ENCODE measurements at regions of chr4 and their contacts with region 1.

Region 1: DNA sequence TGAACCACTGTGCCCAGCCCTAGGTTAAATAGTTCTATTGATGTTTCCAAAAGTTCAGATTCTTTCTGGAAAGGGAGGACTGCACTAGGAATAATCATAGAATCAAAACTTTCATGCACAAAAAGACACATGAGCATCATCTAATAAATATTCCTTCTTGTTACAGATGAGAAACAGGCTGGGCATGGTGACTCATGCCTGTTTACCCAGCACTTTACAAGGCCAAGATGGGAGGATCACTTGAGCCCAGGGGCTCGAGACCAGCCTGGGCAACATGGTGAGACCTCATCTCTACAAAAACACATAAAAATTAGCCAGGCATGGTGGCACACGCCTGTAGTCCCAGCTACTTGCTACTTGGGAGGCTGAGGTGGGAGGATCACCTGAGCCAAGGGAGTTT is 27.7 kb downstream of the LARP7 start:
- DNase-seq: no peak
- H3K4me3 Mint-ChIP-seq: no peak overlapping the region
- H3K27ac Mint-ChIP-seq: no peak overlapping the region
- H3K4me1 Mint-ChIP-seq: no peaks in the 10 kb centered on the region
- H3K27me3 Mint-ChIP-seq: no peaks in the 10 kb centered on the region

Region 2: GRCh38 chr4:111890412-111890811 is 774.2 kb before region 1 on chr4:
- intact Hi-C with region 1: no loop called
- DNase-seq: no peak
- H3K4me3 Mint-ChIP-seq: no peak overlapping the region
- H3K27ac Mint-ChIP-seq: no peak overlapping the region
- H3K4me1 Mint-ChIP-seq: no peaks in the 10 kb centered on the region
- H3K27me3 Mint-ChIP-seq: no peaks in the 10 kb centered on the region

Region 3: DNA sequence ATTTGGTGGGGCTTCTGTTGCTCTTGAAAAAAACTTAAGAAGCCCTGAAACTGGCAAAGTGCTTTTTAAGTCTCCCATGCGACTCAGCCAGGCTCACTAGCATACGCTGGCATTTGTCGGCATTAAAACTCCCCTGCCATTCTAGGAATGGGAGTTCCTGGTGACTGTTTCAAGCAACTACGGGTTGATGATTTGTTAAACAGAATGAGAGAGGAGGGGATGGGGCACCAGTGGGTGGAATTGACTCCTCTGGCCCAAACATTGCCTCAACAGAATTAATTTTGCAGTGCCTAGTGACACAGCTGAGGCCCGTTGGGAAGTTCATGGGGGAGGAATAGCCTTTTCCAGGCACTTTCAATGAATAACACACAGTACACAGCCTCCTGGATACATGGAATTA is 178.7 kb before region 1 on chr4:
- intact Hi-C with region 1: no loop called
- DNase-seq: no peak
- H3K4me3 Mint-ChIP-seq: no peak overlapping the region
- H3K27ac Mint-ChIP-seq: no peak overlapping the region
- H3K4me1 Mint-ChIP-seq: no peaks in the 10 kb centered on the region
- H3K27me3 Mint-ChIP-seq: peaks cover 2% of the 10 kb centered on the region

Region 4: GRCh38 chr4:112589206-112589605 is 75.4 kb before region 1 on chr4:
- intact Hi-C with region 1: no loop called
- DNase-seq: no peak
- H3K4me3 Mint-ChIP-seq: no peak overlapping the region
- H3K27ac Mint-ChIP-seq: no peak overlapping the region
- H3K4me1 Mint-ChIP-seq: no peaks in the 10 kb centered on the region
- H3K27me3 Mint-ChIP-seq: no peaks in the 10 kb centered on the region

Region 5: DNA sequence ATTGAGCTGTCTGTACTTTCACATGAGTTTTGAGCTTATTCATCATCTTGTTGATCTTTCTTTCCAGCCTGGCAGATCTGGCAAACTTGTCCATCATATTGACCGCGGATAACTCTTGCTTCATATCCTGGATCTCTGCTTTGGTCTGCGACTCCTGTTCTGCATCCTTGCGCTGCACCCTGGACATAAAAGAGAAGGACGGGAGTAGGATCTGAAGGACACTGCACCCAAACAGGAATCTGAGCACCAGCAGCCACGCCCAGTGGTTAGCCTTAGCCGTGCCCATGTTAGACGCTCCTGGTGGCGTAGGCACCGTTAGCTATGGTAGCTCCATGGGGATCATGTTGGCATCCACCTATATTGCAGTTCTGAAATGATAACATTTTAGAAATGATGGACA is 28.9 kb after region 1 on chr4:
- intact Hi-C with region 1: loop called (anchors 2 kb)
- DNase-seq: no peak
- H3K4me3 Mint-ChIP-seq: no peak overlapping the region
- H3K27ac Mint-ChIP-seq: no peak overlapping the region
- H3K4me1 Mint-ChIP-seq: no peaks in the 10 kb centered on the region
- H3K27me3 Mint-ChIP-seq: peaks cover 3% of the 10 kb centered on the region

Region 6: GRCh38 chr4:112714922-112715901 is 50.6 kb after region 1 on chr4:
- intact Hi-C with region 1: no loop called
- DNase-seq: no peak
- H3K4me3 Mint-ChIP-seq: no peak overlapping the region
- H3K27ac Mint-ChIP-seq: no peak overlapping the region
- H3K4me1 Mint-ChIP-seq: no peaks in the 10 kb centered on the region
- H3K27me3 Mint-ChIP-seq: peaks cover 15% of the 10 kb centered on the region